Activated T-helper 2 cell treated with anti-CD3 and anti-CD28 coated beads, Interferon-gamma antibody, Interleukin-2, Interleukin-4, amounts not matched to agents 10 μg/mL and 5 μg/mL and 100 μg/mL, durations not matched to agents 14 hours and 24 hours and 36 hours (primary cell): ENCODE measurements at regions of chr6 and their contacts with region 1.

Region 1: DNA sequence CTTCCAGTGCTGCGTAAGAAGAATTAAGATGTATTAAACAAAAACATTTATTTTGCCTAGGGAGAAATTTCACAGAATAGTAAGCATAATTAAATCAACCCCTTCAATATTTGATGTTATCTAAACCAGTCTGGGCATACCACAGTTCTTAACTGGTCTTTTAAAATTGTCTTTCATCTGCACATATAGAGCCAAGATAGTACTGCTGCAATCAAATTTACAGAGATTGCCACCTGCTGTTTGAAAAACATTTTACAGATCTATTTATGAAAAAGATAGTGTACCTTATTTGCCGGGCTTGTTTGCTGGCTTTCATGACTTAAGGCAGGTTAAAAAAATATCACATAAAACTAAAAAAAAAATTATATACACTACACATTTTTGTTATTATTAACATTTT is 323.2 kb downstream of the ADGRB3 start:
- DNase-seq: no peak
- H3K4me3 Mint-ChIP-seq: no peak overlapping the region
- H3K27ac Mint-ChIP-seq: no peak overlapping the region
- H3K4me1 Mint-ChIP-seq: no peaks in the 10 kb centered on the region
- H3K27me3 Mint-ChIP-seq: no peaks in the 10 kb centered on the region

Region 2: GRCh38 chr6:68876792-68877493 is 81.4 kb before region 1 on chr6:
- intact Hi-C with region 1: loop called (anchors 2 kb)
- DNase-seq: no peak
- H3K4me3 Mint-ChIP-seq: no peak overlapping the region
- H3K27ac Mint-ChIP-seq: no peak overlapping the region
- H3K4me1 Mint-ChIP-seq: no peaks in the 10 kb centered on the region
- H3K27me3 Mint-ChIP-seq: no peaks in the 10 kb centered on the region

Region 3: GRCh38 chr6:69232911-69233448 is 274.7 kb after region 1 on chr6:
- intact Hi-C with region 1: no loop called
- DNase-seq: peak; percentile 38
- H3K4me3 Mint-ChIP-seq: no peak overlapping the region
- H3K27ac Mint-ChIP-seq: no peak overlapping the region
- H3K4me1 Mint-ChIP-seq: no peaks in the 10 kb centered on the region
- H3K27me3 Mint-ChIP-seq: no peaks in the 10 kb centered on the region